GM10248 (cell line): ENCODE measurements at regions of chr7 and their contacts with region 1.

Region 1: DNA sequence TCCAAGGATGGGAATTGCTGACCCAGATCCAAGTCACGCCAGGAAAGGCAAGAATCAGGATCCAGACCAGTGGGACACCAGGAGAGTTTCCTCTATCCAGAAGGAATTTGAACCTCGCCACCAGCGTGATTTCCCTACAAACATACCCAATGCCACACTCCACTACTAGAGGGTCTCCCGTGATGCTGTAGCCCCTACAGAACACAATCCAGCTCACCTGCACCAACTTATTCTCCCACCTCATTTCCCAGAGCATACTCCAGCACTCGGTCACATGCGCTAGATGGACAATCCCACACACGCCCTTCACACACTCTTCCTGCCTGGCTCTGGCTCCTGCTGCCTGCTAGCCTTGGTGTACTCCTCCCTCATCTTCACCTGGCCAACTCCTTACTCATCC is 142.1 kb upstream of the PDE1C start:
- DNase-seq: no peak
- CTCF ChIP-seq: no peak

Region 2: GRCh38 chr7:31744294-31744874 is 467.9 kb before region 1 on chr7:
- CTCF ChIA-PET with region 1: interaction called, 21 read pairs
- POLR2A ChIA-PET with region 1: no interaction called
- DNase-seq: peak; percentile 38
- CTCF ChIP-seq: peak; percentile 73

Region 3: GRCh38 chr7:32347244-32347828 is 135.0 kb after region 1 on chr7:
- CTCF ChIA-PET with region 1: interaction called, 50 read pairs
- POLR2A ChIA-PET with region 1: no interaction called
- DNase-seq: peak; percentile 25
- CTCF ChIP-seq: peak; percentile 49

Region 4: DNA sequence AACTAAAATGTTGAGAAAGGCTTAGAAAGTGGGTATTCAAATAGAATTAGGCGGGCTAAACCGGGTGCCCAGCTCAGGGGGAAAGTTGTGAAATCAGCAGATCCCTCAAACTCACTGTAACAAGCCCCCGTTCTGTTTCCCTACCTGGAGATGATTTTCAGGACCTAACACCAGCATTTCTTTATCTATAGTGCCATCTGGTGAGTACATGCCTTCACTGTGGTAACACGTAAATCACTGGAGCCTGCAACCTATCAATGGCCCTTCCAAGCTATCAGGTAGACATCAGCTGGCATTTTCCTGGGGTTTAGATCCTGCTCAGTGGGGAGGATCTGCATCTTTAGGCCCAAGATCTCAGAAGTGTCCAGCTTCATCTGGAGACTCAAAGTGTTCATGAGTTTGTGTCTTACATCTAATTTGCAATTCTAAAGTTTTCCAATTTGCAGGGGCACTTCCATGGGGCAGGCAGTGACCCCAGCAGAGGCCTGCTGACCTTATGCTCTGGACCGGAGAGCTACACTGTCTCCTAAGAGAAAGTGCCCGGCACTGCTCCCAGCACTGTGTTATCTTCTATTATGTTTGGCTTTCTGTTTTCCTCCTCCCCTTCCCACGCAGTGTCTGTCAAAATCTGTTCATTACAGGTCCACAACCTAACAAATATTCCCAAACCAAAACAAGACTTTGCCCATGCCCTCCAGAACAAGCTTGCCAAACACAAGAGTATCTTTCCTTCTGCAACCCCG is 145.4 kb after region 1 on chr7:
- CTCF ChIA-PET with region 1: interaction called, 11 read pairs
- POLR2A ChIA-PET with region 1: no interaction called
- DNase-seq: no peak
- CTCF ChIP-seq: no peak

Region 5: DNA sequence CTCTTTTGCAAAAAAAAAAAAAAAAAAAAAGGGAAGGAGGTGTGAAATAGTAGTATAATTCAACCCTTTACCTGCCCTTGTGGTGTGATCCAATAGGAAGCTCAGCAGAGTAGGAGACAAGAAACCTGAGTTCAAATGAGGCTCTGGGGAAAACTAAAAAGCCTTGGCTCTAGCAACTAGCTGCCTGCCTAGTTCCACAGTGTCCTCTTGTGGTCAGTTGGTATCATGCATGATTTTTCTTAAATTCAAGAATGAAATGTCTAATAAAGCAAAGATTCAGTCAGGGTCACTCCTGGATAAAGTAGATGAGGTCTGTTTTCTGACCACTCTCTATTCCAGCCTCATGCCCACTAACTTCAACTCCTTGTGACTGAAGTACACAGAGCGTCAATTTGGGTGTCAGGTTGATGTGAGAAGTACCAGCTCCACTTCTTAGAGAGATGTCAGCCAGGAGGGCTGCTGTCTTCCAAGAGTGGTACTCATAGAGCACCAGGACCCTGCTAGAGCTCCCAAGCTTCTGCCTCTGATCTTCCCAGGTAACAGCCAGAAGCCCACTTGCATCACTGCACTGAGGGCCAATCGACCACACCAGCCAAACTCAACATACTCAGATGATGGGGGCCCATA is 267.4 kb after region 1 on chr7:
- CTCF ChIA-PET with region 1: interaction called, 13 read pairs
- POLR2A ChIA-PET with region 1: no interaction called
- DNase-seq: peak; percentile 50
- CTCF ChIP-seq: peak; percentile 52